Heart left ventricle (tissue), 16 donors: ENCODE measurements at regions of chr20 and their contacts with region 1.

Region 1: GRCh38 chr20:62793912-62794724 is 2.2 kb upstream of the MRGBP start:
- DNase-seq: peak; percentile 96 to 100 (median 97)
- ATAC-seq: peak; percentile 89 to 94 (median 92)
- H3K4me3 ChIP-seq: peak overlapping the region; percentile 31 to 97 (median 78)
- H3K27ac ChIP-seq: peak overlapping the region; percentile 14 to 96 (median 92)
- H3K4me1 ChIP-seq: peaks cover 4 to 50% (median 23%) of the 10 kb centered on the region in 12 donors
- H3K27me3 ChIP-seq: no peaks in the 10 kb centered on the region
- CTCF ChIP-seq: no peak
- POLR2A ChIP-seq: peak; percentile 71 to 93

Region 2: DNA sequence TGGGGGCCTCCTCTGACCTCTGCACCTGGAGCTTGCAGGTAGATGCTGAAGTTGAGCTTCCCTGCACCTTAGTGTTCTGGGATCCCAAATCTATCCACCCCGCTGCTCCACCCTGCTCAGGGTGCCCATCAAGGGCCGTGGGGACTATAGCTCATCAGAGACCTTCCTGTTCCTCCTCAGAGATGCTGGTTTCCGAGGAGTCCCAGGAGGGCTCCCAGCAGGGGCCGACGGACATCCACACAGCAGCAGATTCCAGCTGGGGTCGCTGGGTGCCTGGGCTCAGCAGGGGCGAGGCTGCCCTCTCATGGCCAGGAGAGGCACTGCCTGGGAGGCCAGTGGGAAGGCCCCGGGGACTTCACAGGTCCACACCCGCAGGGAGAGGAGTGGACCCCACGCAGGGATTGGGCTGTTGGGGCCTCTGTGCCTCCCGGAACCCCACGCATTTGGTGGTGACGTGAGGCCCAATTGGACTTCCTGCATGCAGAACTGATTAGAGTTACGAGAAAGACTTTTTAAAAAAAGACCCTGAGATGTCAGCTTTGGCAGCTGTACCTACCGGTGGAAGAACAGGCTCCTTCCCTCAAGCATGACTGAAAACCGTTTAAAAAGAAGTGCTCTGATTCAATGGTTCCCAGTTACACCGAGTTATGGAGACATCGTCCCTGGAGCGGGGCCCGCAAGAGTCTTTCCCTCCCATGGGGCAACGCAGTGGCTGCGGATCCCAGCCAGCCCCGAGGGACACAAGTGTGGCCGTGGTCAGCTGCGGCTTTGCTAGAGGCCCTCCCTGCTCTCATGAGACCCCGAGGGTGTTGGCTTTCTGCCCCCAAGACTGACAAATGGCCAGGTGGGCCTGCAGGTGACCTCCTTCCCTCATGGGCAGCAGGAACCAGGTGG is 177.1 kb before region 1 on chr20:
- intact Hi-C with region 1: loop called in 1 of 10 experiments (anchors 5 kb)
- DNase-seq: peak; percentile 59 to 92 (median 82)
- ATAC-seq: peak; percentile 63 to 90 (median 78)
- H3K4me3 ChIP-seq: no peak overlapping the region
- H3K27ac ChIP-seq: peak overlapping the region; percentile 44 to 96 (median 76)
- H3K4me1 ChIP-seq: peaks cover 0 to 40% (median 25%) of the 10 kb centered on the region in 12 donors
- H3K27me3 ChIP-seq: no peaks in the 10 kb centered on the region
- CTCF ChIP-seq: peak; percentile 89 to 97 (median 94)
- POLR2A ChIP-seq: no peak

Region 3: DNA sequence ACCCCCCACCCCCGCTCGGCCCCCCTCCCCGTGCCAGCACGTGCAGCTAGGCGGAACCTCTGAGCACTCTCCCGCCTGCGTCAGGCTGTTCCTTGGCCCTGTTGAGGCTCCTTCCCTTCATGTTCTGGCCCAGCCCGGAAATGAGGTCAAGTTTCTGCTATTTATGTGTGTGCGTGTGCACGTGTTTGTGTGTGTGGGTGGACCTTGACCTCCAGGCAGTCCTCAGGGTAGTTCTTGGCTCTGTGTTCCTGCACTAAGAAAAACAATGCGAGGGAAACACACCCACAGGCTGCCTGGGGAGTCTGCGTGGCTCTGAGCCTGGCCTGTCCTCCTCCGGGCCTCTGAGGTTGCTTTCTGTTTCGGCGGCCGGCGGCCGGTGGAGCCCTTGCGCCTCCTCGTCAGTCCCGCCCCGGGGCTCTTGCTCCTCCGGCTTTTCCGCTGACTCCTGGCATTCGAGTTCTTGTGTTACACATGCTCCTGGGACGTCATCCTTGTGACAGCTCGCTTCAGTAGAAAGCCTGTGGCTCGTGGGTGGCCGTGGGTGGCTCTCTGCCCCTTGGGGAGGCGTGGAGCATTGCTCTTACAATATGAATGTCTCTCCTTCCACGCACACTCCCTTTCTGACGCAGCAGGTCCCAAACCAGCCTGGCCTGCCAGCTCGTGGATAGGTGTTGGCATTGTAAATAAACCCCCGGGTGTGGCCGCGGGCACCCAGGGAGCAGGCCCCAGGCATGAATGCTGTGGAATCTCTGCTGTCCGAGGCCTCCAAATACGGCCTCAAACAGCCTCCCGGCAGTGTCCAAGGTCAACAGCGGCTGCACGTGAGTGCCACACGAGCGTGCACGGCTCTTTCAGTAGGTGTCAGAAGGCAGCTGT is 141.8 kb before region 1 on chr20:
- intact Hi-C with region 1: loop called in 1 of 10 experiments (anchors 5 kb)
- DNase-seq: peak; percentile 93 to 96 (median 94)
- ATAC-seq: peak; percentile 89 to 96 (median 92)
- H3K4me3 ChIP-seq: peak overlapping the region in 9 of 12 donors; percentile 5 to 47 (median 31)
- H3K27ac ChIP-seq: peak overlapping the region; percentile 82 to 96 (median 93)
- H3K4me1 ChIP-seq: peaks cover 8 to 48% (median 33%) of the 10 kb centered on the region in 12 donors
- H3K27me3 ChIP-seq: no peaks in the 10 kb centered on the region
- CTCF ChIP-seq: peak in 1 of 12 donors; percentile 23
- POLR2A ChIP-seq: peak in 1 of 2 donors; percentile 51

Region 4: DNA sequence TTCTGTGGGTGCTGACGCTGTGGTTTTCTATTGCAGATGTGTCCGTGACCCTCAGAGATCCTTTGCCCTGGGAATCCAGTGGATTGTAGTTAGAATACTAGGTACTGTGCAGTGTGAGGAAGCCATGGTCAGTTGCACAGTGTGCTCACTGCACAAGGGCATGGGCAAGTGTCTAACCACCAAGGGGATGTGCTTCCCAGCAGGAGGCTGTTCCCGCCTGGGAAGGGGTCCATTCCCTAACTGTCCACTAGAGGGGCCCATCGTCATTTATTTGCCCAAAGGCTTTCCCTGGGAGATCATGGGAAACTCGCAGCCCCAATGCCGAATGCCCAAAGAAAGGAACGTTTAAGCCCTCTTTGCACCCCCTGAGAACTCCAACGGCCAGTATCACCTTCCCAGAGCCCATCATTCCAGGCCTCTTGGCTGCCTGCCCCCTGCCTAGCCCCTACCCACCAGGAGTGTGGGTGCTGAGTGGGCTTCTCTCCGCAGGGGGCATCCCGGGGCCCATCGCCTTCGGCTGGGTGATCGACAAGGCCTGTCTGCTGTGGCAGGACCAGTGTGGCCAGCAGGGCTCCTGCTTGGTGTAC is 125.6 kb before region 1 on chr20:
- intact Hi-C with region 1: loop called (anchors 1 to 5 kb)
- DNase-seq: peak in 4 of 5 donors; percentile 63 to 73 (median 66)
- ATAC-seq: peak in 3 of 4 donors; percentile 53 to 61 (median 56)
- H3K4me3 ChIP-seq: no peak overlapping the region
- H3K27ac ChIP-seq: no peak overlapping the region
- H3K4me1 ChIP-seq: peaks cover 0 to 27% (median 12%) of the 10 kb centered on the region in 12 donors
- H3K27me3 ChIP-seq: peaks cover 0 to 2% (median 0%) of the 10 kb centered on the region in 9 donors
- CTCF ChIP-seq: peak; percentile 75 to 87 (median 83)
- POLR2A ChIP-seq: no peak

Region 5: DNA sequence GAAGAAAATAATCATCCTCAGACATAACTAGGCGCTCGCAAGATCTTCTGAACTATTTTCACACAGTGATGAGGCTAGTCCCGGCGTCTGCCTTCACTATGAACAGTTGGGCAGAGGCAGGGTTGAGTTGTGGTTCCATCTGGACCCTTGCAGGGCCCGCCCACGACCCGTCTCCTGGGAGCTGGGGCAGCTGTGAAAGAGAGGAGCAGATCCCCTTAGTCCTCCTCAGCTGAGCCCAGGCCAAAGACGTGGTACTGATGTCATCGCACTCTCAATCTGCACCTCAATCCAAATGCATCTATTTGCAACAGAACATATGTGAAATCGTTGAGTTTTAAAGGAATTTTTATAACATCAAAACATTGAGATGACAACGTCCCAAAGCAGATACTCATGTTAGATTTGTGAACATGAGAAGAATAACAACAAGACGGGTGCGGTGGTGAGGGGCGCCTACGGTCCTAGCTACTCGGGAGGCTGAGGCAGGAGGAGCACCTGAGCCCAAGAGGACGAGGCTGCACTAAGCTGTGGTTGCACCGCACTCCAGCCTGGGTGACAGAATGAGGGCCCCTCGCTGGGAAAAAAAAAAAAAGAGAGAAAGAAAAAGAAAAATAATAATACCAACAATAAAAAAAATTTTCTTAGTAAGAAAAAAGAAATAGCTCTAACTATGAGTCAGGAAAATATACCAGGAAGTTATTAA is 52.2 kb after region 1 on chr20:
- intact Hi-C with region 1: no loop called
- DNase-seq: peak; percentile 64 to 82 (median 66)
- ATAC-seq: peak in 3 of 4 donors; percentile 45 to 84 (median 66)
- H3K4me3 ChIP-seq: no peak overlapping the region
- H3K27ac ChIP-seq: no peak overlapping the region
- H3K4me1 ChIP-seq: no peaks in the 10 kb centered on the region
- H3K27me3 ChIP-seq: no peaks in the 10 kb centered on the region
- CTCF ChIP-seq: no peak
- POLR2A ChIP-seq: no peak

Region 6: DNA sequence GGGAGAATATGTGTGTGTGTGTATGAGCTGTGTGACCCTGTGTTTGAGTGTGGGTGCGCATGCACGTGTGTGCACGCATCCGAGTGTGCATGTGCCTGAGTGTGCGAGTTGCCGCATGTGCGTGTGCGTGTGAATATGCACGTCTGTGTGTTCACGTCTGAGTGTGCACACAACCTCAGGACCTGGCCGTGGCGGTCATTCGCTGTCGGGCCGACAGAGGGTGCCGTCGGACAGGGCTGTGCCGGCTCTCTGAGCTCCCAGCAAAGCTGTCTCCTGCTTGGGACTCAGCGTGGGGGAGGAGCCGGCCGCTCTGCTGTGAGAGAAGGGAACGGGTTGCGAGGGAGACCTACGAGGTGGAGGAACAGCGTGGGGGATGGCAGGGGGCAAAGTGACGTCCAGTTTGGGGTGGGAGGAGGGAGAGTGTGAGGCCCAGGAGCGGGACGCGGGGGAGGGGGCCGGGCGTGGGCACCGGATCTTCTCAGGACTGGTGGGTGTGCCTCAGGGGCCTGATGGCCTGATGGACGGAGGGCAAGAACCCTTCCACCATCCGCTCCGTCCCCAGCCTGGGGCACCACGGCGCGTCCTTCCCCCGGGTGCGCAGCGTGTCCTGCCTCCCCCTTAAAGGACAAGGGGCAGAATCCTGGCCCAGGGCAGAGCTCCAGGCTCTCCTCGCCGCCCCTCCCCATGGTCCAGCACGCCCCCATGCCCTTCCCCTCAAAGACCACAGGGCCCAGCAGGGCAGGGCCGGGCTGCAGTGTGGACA is 178.3 kb after region 1 on chr20:
- intact Hi-C with region 1: no loop called
- DNase-seq: peak; percentile 82 to 92 (median 88)
- ATAC-seq: peak; percentile 85 to 97 (median 94)
- H3K4me3 ChIP-seq: peak overlapping the region in 9 of 12 donors; percentile 23 to 45 (median 33)
- H3K27ac ChIP-seq: no peak overlapping the region
- H3K4me1 ChIP-seq: peaks cover 0 to 12% (median 6%) of the 10 kb centered on the region in 12 donors
- H3K27me3 ChIP-seq: peaks cover 25 to 66% (median 39%) of the 10 kb centered on the region in 9 donors
- CTCF ChIP-seq: peak; percentile 75 to 91 (median 86)
- POLR2A ChIP-seq: no peak